Calu3 (cell line): ENCODE measurements at regions of chr5 and their contacts with region 1.

Region 1: DNA sequence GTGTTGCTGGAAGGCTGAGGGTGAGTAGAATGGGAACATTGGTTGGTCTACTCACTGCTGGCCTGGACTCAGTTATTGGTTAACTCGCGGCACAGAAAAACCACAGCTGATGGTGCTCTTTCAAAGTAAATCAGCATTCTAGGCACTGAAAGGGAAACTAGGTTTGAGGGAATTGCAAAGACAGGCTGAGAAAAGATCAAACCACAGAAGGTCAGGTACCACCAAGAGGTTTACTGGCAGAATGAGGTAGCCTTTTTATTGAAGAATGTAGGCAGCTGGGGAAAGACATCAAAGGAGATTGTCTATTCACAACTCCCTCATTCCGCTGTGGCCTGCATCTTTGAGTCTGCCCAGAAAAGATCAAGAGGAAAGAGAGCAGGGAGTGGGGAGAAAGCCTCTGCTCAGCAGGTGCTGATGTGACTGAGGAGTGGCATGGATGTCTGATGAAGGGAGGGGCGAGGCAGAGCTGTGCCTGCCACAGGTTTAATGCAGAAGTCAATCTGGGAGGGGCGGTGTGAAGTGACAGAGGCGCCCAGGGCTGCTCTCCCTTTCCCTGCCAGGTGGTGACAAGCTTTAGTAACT is 255.5 kb downstream of the MAN2A1 start:
- DNase-seq: no peak
- H3K4me3 Mint-ChIP-seq: no peak overlapping the region
- H3K27ac Mint-ChIP-seq: no peak overlapping the region
- H3K4me1 Mint-ChIP-seq: no peaks in the 10 kb centered on the region
- H3K27me3 Mint-ChIP-seq: peaks cover 34% of the 10 kb centered on the region
- CTCF ChIP-seq: no peak

Region 2: DNA sequence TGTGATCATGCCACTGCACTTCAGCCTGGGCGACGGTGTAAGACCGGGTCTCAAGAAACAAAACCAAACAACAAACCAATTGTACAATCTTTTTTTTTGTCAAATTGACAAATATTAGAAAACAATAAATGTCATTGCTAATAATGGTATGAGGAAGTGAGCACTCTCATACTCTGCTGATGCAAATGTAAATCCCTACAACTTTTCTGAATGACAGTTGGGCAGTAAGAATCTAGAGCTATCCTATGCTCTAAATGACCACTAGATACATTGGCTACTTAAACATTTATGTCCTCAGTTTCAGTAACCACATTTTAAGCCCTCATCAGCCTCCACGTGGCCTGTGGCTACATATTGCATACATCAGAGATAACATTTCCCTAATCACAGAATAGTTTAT is 941.3 kb before region 1 on chr5:
- CTCF ChIA-PET with region 1: no interaction called
- intact Hi-C with region 1: no loop called
- DNase-seq: no peak
- H3K4me3 Mint-ChIP-seq: no peak overlapping the region
- H3K27ac Mint-ChIP-seq: no peak overlapping the region
- H3K4me1 Mint-ChIP-seq: no peaks in the 10 kb centered on the region
- H3K27me3 Mint-ChIP-seq: no peaks in the 10 kb centered on the region
- CTCF ChIP-seq: no peak

Region 3: DNA sequence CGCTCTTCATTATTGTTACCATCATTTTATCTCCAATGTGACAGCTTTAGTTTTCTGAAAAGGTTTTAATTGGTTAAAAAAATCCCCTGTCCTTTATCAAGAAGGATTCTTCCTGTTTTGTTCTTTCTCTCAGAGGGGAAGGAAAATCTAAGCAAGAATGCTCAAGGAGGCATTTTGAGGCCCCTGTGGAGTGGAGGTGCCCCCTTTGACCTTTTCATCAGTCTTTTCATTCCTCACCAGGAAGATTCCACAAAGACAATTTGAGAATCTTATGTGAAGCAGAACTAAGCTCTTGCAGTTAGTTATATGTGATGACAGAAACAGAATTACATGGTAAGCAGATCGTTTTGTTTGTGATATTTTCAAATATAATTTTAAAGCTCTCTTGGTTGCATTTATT is 234.1 kb after region 1 on chr5:
- CTCF ChIA-PET with region 1: no interaction called
- intact Hi-C with region 1: loop called (anchors 5 kb)
- DNase-seq: no peak
- H3K4me3 Mint-ChIP-seq: no peak overlapping the region
- H3K27ac Mint-ChIP-seq: no peak overlapping the region
- H3K4me1 Mint-ChIP-seq: no peaks in the 10 kb centered on the region
- H3K27me3 Mint-ChIP-seq: no peaks in the 10 kb centered on the region
- CTCF ChIP-seq: no peak